GM10248 (cell line): ENCODE measurements at regions of chr2 and their contacts with region 1.

Region 1: GRCh38 chr2:173090276-173090877 is 14.7 kb downstream of the MAP3K20 start:
- DNase-seq: no peak
- CTCF ChIP-seq: no peak

Region 2: DNA sequence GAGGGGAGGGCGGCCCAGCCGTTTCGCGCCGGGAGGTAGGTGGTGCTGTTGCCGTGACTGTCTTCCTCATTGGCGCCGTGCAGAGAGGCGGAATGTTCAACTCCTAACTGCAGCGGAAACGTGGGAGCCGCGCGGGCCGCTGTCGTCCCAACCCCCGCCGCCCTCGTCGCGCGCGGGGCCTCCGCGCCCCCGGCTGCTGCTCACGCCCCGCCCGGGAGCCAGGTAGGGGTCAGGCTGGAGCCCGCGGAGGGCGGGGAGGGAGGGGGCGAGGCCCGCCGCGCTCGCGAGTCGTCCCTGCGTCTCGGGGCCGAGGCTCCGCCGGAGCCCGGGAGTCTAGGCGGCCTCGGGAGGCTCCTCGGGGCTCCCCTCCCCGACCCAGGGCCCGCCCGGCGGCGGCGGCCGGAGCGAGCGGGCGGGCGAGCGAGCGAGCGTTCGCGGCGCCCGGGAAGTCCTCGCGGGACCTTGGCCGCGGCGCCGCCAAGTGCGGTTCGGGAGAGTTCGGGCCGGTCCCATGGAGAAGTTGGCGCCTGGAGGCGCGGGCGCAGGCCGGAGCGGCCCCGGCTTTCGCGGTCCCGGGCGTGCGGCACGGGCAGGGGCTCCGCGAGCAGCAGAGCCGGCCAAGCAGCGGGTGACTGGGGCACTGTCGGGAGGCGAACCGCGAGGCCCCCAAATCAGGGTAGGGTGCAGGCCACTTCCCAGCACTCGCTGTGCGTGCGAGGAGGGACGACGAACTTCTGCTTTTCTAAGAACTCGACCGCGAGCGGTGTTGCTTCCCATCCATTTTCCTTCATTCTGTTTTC is 14.4 kb before region 1 on chr2 and contains the start of gene MAP3K20:
- CTCF ChIA-PET with region 1: interaction called, 37 read pairs
- POLR2A ChIA-PET with region 1: interaction called, 3 read pairs
- DNase-seq: peak; percentile 72
- CTCF ChIP-seq: peak; percentile 53

Region 3: DNA sequence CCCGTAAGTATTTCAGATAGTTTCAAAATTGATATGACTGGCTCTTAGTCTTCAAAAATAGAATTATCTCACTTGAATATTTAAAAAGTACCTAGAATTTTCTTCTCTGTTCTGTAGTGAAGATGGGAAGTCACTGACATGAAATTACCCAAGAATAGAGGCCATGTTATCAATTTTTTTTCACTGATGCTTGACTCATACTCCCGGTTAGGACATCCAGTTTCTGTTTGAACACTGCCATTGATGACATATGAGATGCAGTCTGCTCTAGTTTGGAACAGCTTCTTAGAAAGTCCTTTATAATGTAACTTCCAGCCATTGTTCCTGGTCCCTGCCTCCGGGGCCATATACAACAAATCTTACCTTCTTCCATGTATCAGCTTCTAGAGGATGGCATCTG is 11.3 kb after region 1 on chr2:
- CTCF ChIA-PET with region 1: interaction called, 10 read pairs
- POLR2A ChIA-PET with region 1: no interaction called
- DNase-seq: peak; percentile 33
- CTCF ChIP-seq: no peak

Region 4: GRCh38 chr2:173134703-173135102 is 44.3 kb after region 1 on chr2:
- CTCF ChIA-PET with region 1: no interaction called
- POLR2A ChIA-PET with region 1: no interaction called
- DNase-seq: no peak
- CTCF ChIP-seq: no peak